Activated CD4-positive, alpha-beta T cell treated with anti-CD3 and anti-CD28 coated beads for 36 hours (primary cell): ENCODE measurements at regions of chr22 and their contacts with region 1.

Region 1: GRCh38 chr22:50250555-50251476 is at the start of gene HDAC10:
- DNase-seq: peak; percentile 94
- ATAC-seq: peak; percentile 93
- H3K4me3 Mint-ChIP-seq: peak within 1 kb of the TSS; percentile 82
- H3K27ac Mint-ChIP-seq: peak within 1 kb of the TSS; percentile 51
- H3K4me1 Mint-ChIP-seq: peaks cover 19% of the 10 kb centered on the region
- H3K27me3 Mint-ChIP-seq: no peaks in the 10 kb centered on the region
- total RNA-seq, gene HDAC10: 33.5 to 41.5 TPM

Region 2: GRCh38 chr22:50228366-50228765 is 22.4 kb before region 1 on chr22:
- CTCF ChIA-PET with region 1: no interaction called
- POLR2A ChIA-PET with region 1: no interaction called
- intact Hi-C with region 1: no loop called
- DNase-seq: no peak
- ATAC-seq: no peak
- H3K4me3 Mint-ChIP-seq: no peak overlapping the region
- H3K27ac Mint-ChIP-seq: no peak overlapping the region
- H3K4me1 Mint-ChIP-seq: no peaks in the 10 kb centered on the region
- H3K27me3 Mint-ChIP-seq: no peaks in the 10 kb centered on the region

Region 3: DNA sequence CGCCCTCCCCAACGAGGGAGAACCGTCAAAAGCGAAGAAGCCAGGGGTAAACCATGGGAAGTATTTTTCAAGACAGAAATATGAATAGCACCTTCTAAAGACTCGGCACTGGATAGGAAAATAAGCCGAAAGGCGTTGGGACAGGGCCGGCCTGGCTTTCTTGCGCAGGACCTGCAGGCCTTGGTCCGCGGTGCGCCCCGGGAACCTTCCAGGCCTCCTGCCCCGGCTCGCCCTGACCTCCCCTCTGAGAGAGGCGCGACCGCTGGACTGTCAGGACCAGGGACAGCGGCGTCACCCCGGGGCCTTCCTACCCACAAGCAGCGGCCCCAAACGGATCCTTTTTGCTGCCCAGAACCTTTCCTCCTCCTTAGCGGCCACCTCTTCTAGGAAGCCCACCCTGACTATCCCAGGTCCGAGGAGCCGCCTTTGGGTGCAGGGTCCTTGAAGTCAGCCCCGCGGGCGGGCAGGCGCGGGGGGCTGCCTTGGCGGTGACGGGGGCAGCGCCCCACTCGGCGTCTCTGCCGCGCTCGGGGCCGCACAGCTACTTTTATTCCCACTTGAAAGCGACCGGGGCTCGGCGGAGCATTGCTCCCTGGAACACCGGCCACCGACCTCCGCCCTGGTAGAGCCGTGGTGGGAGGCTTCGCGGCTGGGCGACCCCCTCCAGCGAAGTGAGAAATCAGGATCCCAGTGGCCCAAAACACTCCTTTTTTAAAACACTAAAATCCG is 20.0 kb after region 1 on chr22:
- CTCF ChIA-PET with region 1: interaction called, 6 read pairs
- POLR2A ChIA-PET with region 1: no interaction called
- intact Hi-C with region 1: loop called in 1 of 2 experiments (anchors 1 kb)
- DNase-seq: peak; percentile 86
- ATAC-seq: peak; percentile 46
- H3K4me3 Mint-ChIP-seq: peak overlapping the region; percentile 65
- H3K27ac Mint-ChIP-seq: no peak overlapping the region
- H3K4me1 Mint-ChIP-seq: peaks cover 13% of the 10 kb centered on the region
- H3K27me3 Mint-ChIP-seq: peaks cover 4% of the 10 kb centered on the region

Region 4: GRCh38 chr22:50314455-50315288 is 63.9 kb after region 1 on chr22:
- CTCF ChIA-PET with region 1: no interaction called
- POLR2A ChIA-PET with region 1: interaction called, 3 read pairs
- intact Hi-C with region 1: loop called in 1 of 2 experiments (anchors 1 kb)
- DNase-seq: peak; percentile 88
- ATAC-seq: peak; percentile 96
- H3K4me3 Mint-ChIP-seq: peak overlapping the region; percentile 76
- H3K27ac Mint-ChIP-seq: peak overlapping the region; percentile 92
- H3K4me1 Mint-ChIP-seq: peaks cover 16% of the 10 kb centered on the region
- H3K27me3 Mint-ChIP-seq: no peaks in the 10 kb centered on the region

Region 5: GRCh38 chr22:50326959-50327710 is 76.3 kb after region 1 on chr22 and contains the start of gene DENND6B:
- CTCF ChIA-PET with region 1: interaction called, 4 read pairs
- POLR2A ChIA-PET with region 1: no interaction called
- intact Hi-C with region 1: loop called in 1 of 2 experiments (anchors 1 kb)
- DNase-seq: peak; percentile 88
- ATAC-seq: peak; percentile 95
- H3K4me3 Mint-ChIP-seq: peak within 1 kb of the TSS; percentile 74
- H3K27ac Mint-ChIP-seq: peak within 1 kb of the TSS; percentile 63
- H3K4me1 Mint-ChIP-seq: peaks cover 14% of the 10 kb centered on the region
- H3K27me3 Mint-ChIP-seq: peaks cover 7% of the 10 kb centered on the region
- total RNA-seq, gene DENND6B: 2.8 TPM

Region 6: DNA sequence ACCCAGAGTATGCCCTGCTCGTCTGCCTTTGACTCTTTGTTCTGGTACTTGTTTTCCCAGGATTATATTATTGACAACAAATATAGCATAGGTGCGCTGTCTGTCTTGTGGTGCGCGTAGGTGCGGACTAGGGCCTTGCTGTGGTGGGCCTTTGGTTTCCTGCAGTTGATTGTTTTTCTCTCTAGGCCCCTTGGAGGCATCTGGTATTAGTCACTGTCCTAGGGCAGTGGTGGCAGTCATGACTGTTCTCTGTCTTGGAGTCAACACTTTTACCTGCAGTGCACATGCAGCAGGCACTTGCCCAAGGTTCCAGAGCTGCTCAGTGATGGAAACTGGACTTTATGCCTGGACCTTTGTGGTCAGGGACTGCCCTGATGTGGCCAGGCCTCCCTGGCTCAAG is 110.9 kb after region 1 on chr22:
- CTCF ChIA-PET with region 1: interaction called, 3 read pairs
- POLR2A ChIA-PET with region 1: no interaction called
- intact Hi-C with region 1: loop called in 1 of 2 experiments (anchors 1 kb)
- DNase-seq: no peak
- ATAC-seq: peak; percentile 79
- H3K4me3 Mint-ChIP-seq: no peak overlapping the region
- H3K27ac Mint-ChIP-seq: peak overlapping the region; percentile 79
- H3K4me1 Mint-ChIP-seq: peaks cover 27% of the 10 kb centered on the region
- H3K27me3 Mint-ChIP-seq: no peaks in the 10 kb centered on the region

Region 7: DNA sequence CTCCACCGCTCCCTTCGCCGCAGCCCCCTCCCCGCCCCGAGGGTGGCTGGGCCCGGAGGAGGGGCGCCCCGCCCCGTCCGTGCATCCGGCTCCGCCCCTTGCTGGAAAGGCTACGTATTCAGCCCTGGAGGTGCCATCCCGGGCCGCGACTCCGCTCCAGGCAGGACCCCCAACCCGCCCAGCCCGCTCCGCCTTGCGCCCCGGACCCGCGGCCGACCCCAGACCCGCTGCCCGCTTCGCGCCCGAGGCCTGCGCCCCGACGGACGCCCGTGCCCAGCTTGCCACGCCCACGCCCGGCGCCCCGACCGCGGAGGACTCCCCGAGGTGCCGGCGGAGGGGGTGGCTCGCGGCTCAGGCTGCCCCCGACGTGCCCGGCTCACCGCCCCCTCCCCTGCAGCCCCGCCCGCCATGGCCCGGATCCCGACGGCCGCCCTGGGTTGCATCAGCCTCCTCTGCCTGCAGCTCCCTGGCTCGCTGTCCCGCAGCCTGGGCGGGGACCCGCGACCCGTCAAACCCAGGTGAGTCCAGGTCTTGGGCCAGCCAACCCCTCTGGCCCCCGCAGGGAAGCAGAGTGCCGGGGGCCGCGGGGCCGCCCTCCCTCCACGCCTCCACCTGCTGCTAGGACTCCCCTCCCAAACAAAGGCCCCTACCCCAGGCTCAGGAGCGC is 230.8 kb after region 1 on chr22 and contains the start of gene ADM2:
- CTCF ChIA-PET with region 1: no interaction called
- POLR2A ChIA-PET with region 1: no interaction called
- intact Hi-C with region 1: loop called in 1 of 2 experiments (anchors 2 kb)
- DNase-seq: peak; percentile 82
- ATAC-seq: peak; percentile 87
- H3K4me3 Mint-ChIP-seq: peak within 1 kb of the TSS; percentile 74
- H3K27ac Mint-ChIP-seq: no peak within 1 kb of the TSS
- H3K4me1 Mint-ChIP-seq: no peaks in the 10 kb centered on the region
- H3K27me3 Mint-ChIP-seq: peaks cover 8% of the 10 kb centered on the region
- total RNA-seq, gene ADM2: 7.5 to 7.9 TPM